Ascending aorta (tissue), 2 donors: ENCODE measurements at regions of chr18 and their contacts with region 1.

Region 1: GRCh38 chr18:36129300-36130038 is at the starts of genes ELP2 and SLC39A6:
- DNase-seq: peak; percentile 91 to 98
- H3K4me3 ChIP-seq: peak within 1 kb of the TSS; percentile 76 to 89
- H3K27ac ChIP-seq: peak within 1 kb of the TSS; percentile 98 to 100
- H3K4me1 ChIP-seq: peaks cover 9 to 21% of the 10 kb centered on the region in 2 donors
- H3K27me3 ChIP-seq: no peaks in the 10 kb centered on the region
- CTCF ChIP-seq: no peak
- total RNA-seq, gene ELP2: 9.7 TPM
- total RNA-seq, gene SLC39A6: 32.1 TPM

Region 2: GRCh38 chr18:35972197-35973052 is 157.0 kb before region 1 on chr18 and contains the start of gene RMP24:
- intact Hi-C with region 1: loop called (anchors 2 kb)
- DNase-seq: peak; percentile 54 to 95
- H3K4me3 ChIP-seq: peak within 1 kb of the TSS; percentile 85 to 96
- H3K27ac ChIP-seq: peak within 1 kb of the TSS; percentile 89
- H3K4me1 ChIP-seq: peaks cover 4 to 19% of the 10 kb centered on the region in 2 donors
- H3K27me3 ChIP-seq: no peaks in the 10 kb centered on the region
- CTCF ChIP-seq: no peak

Region 3: DNA sequence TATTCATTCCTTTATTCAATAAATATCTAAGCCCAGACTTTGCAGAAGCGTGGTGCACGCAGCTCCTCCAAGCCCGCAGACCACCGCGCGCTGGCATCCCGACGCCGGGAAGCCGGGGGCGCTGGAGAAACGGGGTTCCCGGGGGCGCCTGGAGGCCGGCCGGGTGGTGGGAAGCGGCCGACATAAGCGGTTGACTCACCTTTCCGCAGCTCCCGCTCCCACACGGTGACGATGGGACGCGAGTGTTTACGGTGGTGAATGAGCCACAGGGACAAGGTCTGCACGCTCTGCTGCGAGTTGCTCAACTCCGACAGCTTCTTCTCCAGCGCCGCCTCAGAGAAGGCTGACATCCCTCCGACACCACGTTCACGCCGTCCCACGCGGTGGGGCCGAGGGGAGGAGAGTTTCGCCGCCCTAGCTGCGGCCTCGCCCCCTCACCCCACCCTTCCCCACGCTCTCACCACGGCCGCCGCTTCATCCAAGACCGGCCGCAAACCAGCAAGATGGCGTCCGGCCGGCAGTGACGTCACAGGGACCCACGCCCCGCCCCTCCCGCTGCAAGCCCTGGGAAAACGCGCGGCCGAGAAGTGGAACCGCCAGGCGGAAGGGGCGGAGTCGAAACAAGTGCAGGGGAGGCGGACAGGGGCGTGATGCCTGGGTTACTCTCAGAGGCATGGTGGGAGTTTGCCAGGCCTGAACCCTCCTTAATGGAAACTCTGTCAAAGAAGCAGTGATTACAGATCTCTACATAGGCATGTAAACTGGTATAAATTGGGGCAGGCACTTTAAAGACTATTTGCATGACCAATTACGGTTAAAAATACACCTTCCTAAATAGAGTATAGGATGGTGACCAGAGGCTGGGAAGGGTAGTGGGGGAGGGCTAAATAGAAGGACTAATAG is 62.2 kb before region 1 on chr18 and contains the start of gene RPRD1A:
- intact Hi-C with region 1: loop called (anchors 2 kb)
- DNase-seq: peak; percentile 83 to 98
- H3K4me3 ChIP-seq: peak within 1 kb of the TSS; percentile 79 to 98
- H3K27ac ChIP-seq: peak within 1 kb of the TSS; percentile 88 to 92
- H3K4me1 ChIP-seq: peaks cover 6 to 10% of the 10 kb centered on the region in 2 donors
- H3K27me3 ChIP-seq: no peaks in the 10 kb centered on the region
- CTCF ChIP-seq: no peak
- total RNA-seq, gene RPRD1A: 16.4 TPM

Region 4: GRCh38 chr18:36186911-36187834 is 57.7 kb after region 1 on chr18 and contains the start of gene MOCOS:
- intact Hi-C with region 1: loop called (anchors 2 kb)
- DNase-seq: peak; percentile 38 to 86
- H3K4me3 ChIP-seq: peak within 1 kb of the TSS; percentile 64 to 84
- H3K27ac ChIP-seq: peak within 1 kb of the TSS in 1 of 2 donors; percentile 50
- H3K4me1 ChIP-seq: peaks cover 0 to 11% of the 10 kb centered on the region in 2 donors
- H3K27me3 ChIP-seq: no peaks in the 10 kb centered on the region
- CTCF ChIP-seq: no peak
- total RNA-seq, gene MOCOS: 0.21 TPM

Region 5: DNA sequence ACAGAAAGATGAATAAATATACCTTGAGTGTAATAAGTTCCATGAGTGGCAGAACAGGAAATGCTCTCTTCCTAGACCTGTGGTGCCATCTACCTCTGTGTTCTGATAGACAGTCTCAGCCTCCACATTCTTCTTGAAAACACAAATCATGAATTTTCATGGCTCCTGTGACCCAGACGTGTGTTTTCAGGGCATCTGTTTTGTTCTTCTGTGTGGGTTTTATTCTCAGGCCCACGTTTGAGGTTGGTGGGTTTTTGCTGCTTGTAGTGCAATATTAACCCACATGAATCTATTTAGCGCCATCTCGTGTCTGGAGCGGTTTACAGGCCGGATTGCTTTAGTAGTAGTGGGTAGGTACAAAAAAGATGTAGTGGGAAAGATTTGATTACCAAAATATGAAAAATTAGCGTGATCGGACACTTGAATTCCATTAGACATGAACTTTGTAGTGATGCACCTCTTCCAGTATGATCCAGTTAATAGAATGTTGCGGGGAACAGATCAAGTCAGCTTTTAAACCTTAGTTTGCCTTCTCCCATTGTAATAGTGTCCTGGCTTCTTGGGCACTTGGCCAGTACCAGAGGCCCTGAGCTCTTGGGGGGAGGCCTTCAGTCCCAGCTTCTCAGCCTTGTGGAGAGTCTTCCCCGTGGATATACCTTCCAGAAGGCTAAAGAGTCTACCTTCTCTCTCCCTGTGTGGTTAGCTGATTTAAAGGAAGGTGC is 442.8 kb after region 1 on chr18:
- intact Hi-C with region 1: loop called (anchors 5 kb)
- DNase-seq: peak in 1 of 2 donors; percentile 76
- H3K4me3 ChIP-seq: no peak overlapping the region
- H3K27ac ChIP-seq: peak overlapping the region; percentile 13 to 54
- H3K4me1 ChIP-seq: no peaks in the 10 kb centered on the region
- H3K27me3 ChIP-seq: no peaks in the 10 kb centered on the region
- CTCF ChIP-seq: peak; percentile 38 to 80 (median 52)